Activated CD4-positive, alpha-beta T cell treated with anti-CD3 and anti-CD28 coated beads for 36 hours (primary cell): ENCODE measurements at regions of chr7 and their contacts with region 1.

Region 1: DNA sequence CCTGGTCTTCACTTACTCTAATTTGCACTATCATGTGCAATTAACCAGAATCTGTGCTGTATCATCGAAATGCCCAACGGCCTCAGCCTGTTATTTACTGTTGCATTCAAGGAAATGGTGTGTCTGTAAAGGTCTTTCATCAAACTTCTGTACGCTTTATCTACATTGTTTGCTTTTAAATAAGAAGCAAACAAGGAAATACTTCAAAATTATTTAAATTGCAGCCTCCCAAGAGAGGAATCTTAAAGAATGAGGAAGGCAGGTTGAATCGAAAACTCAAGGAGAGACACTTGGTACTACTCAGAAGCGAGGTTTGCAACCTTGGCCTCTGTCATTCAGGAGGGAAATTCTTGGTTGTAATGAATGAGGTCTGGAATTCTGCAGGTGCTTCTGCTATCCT is 40.7 kb downstream of the MGAM start:
- DNase-seq: no peak
- ATAC-seq: no peak
- H3K4me3 Mint-ChIP-seq: no peak overlapping the region
- H3K27ac Mint-ChIP-seq: no peak overlapping the region
- H3K4me1 Mint-ChIP-seq: no peaks in the 10 kb centered on the region
- H3K27me3 Mint-ChIP-seq: peaks cover 10% of the 10 kb centered on the region

Region 2: GRCh38 chr7:142001163-142001874 is 35.1 kb before region 1 on chr7:
- CTCF ChIA-PET with region 1: no interaction called
- POLR2A ChIA-PET with region 1: no interaction called
- intact Hi-C with region 1: loop called in 1 of 2 experiments (anchors 2 kb)
- DNase-seq: no peak
- ATAC-seq: no peak
- H3K4me3 Mint-ChIP-seq: no peak overlapping the region
- H3K27ac Mint-ChIP-seq: no peak overlapping the region
- H3K4me1 Mint-ChIP-seq: no peaks in the 10 kb centered on the region
- H3K27me3 Mint-ChIP-seq: peaks cover 4% of the 10 kb centered on the region